Left cardiac atrium (tissue), 4 donors: ENCODE measurements at regions of chr19 and their contacts with region 1.

Region 1: DNA sequence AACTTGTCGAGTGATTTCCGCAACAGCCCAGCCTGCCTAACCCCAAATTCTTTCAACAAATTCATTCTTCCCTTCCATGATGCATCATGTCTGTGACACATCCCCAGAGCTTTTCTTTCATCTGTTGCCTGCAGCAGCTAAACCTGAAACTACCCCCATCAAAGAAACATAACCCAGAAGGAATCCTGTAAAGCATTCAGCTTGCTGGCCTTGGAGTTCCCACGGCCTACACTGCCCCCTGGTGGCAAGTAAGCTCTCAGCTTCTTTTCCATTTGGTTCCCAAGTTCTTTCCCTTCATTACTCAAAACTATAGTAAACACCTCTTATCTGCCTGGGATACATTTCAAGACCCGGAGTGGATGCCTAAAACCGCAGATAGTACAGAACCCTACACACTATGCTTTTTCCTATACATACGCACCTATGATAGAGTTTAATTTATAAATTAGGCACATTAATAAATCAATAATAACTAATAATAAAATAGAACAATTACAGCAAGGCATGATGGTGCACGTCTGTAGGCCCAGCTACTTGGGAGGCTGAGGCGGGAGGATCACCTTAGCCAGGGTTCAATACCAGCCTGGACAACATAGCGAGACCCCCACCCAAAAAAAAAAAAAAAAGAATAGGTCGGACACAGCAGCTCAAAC is 7.4 kb downstream of the ETHE1 start:
- DNase-seq: peak; percentile 78
- ATAC-seq: peak; percentile 61 to 81

Region 2: DNA sequence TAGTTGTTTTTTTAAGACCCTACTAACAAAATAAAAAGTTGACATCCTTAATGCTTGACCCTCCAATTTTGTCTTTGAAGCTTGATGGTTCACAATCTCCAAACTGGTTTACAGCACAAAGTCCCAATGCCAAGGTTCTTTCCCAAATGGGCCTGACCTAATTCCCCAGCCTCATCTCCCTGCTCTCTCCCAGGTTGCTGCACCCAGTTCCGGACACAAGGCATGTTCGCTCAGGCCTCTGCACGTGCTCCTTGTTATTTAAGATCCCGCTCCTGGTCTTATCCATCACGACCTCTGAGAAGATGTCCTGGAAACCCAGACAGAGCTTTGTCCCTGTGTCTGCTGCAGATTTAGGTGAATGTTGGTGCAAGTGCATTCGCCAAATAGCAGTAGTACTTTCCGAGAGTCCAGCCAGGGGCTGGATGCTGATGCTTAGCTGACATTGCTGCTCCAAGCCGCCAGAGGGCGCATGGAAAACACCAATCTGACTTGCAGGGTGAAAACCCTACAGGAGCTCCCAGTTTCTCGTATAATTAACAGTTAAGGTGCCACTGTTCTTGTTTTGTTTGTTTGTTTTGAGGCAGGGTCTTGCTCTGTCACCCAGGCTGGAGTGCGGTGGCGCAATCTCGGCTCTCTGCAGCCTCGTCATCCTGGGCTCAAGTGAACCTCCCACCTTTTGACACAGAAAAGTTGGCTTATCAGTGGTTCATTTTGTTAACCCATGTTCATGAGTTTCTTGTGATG is 72.6 kb before region 1 on chr19:
- intact Hi-C with region 1: loop called (anchors 1 to 2 kb)
- DNase-seq: peak; percentile 79
- ATAC-seq: peak; percentile 86 to 91

Region 3: GRCh38 chr19:43482193-43482592 is 37.4 kb before region 1 on chr19:
- intact Hi-C with region 1: no loop called
- DNase-seq: no peak
- ATAC-seq: no peak

Region 4: DNA sequence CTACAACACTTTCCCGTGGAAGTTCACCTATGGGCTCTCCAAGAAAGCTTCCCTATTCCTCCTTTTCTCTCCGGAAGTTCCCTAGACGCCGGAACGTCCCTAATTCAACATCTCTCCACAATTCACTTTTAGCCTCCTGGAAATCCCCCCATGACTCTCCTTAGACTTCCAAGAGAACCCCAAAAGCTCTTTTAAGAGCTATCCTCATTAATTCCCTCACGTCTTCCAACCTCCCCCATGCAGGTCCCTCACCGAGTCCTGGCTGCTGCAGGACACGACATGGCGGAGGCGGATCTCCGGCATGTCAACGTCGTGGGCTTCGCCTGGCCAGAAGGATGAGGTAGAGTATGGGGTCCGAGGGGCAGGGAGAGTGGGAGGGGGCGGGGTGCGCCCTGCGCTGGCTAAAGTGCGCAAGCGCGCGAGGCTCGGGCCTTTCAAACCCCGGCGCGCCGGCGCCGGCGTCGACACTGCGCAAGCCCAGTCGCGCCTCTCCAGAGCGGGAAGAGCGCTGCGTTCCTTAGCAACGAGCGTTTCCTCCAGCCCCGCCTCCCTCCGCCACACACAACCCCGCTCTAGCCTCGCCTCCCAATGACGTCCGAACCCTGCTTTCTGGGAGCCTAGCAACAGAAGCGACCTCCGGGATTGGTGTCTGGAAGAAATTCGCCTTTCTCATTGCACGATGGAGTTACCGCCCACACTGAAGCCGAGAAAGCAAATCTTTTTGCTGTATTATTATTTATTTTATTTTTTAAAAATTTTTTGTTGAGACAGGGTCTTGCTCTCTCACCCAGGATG is 55.8 kb after region 1 on chr19 and contains the starts of genes PINLYP and XRCC1:
- intact Hi-C with region 1: no loop called
- DNase-seq: peak; percentile 99
- ATAC-seq: peak; percentile 99 to 100
- total RNA-seq, gene PINLYP: 3.2 to 4.0 TPM
- total RNA-seq, gene XRCC1: 14.0 to 17.4 TPM